SK-N-SH (cell line): ENCODE measurements at regions of chr9 and their contacts with region 1.

Region 1: DNA sequence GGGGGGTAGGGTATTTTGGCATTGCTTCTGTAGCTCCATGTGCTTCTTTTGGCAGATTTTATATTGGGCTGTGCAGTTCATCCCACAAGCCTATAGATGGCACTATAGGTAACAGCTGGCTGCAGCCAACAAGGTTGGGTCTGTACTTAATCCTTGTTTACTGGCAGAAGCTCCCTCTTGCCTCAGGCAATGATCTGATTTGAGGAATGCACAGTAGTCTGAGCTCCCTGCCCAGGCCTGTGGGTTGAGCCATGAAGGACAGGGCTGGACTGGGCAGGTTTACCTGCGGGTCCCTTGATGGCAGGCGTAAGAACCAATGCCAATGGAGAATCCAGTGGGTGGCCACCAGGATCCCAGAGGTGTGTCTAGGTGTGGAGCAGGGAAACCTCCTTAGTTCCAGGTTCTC is 11.7 kb upstream of the OR1J2 start:
- DNase-seq: peak; percentile 45
- H3K4me3 ChIP-seq: no peak overlapping the region
- H3K27ac ChIP-seq: no peak overlapping the region
- H3K4me1 ChIP-seq: no peaks in the 10 kb centered on the region; a peak in 1 of 4 replicates
- H3K27me3 ChIP-seq: no peaks in the 10 kb centered on the region
- CTCF ChIP-seq: peak; percentile 78
- EP300 ChIP-seq: no peak
- RAD21 ChIP-seq: peak; percentile 59

Region 2: DNA sequence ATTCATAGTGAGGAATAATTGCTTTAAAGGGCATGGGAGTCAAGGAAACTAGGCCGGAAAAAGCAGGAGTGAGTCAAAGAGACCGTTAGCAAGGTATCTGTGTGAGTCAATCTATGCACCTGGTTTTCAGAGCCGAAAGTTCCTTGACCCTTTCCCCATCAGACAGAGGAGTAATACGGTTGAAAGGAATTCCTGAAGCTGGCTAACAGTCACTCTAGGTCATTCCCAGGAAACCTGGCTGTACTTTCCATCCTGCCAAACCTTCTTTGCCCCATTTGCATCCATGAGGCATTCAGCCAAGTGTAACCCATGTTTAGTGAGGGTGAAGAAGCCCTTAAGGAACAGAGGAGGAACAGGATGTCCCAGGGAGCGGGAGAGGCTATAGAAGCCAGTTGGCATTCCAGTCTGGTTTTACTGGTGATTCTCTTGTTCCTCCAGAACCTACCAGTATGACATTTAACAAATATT is 250.4 kb before region 1 on chr9:
- CTCF ChIA-PET with region 1: no interaction called
- POLR2A ChIA-PET with region 1: no interaction called
- DNase-seq: no peak
- H3K4me3 ChIP-seq: no peak overlapping the region
- H3K27ac ChIP-seq: no peak overlapping the region
- H3K4me1 ChIP-seq: no peaks in the 10 kb centered on the region
- H3K27me3 ChIP-seq: no peaks in the 10 kb centered on the region
- CTCF ChIP-seq: no peak
- EP300 ChIP-seq: no peak
- RAD21 ChIP-seq: no peak

Region 3: DNA sequence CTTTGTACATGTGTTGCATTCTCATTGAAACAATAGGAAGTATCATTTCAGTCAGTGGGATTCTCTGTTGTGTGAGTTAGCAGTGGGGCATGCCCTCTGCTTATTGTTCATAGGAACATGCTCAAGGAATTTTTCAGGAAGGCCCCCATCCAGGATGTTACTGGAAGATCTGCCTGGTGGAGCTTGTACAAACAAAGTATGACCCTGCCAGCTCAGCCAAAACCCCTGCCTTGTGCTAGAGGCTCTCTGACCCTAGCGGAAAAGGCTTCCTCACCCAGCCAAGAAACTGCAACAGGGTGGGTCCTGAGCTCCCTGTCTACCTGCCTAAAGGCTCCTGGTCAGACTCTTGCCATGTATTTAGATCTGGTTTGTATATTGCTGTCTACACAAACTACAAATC is 191.0 kb before region 1 on chr9:
- CTCF ChIA-PET with region 1: no interaction called
- POLR2A ChIA-PET with region 1: no interaction called
- DNase-seq: no peak
- H3K4me3 ChIP-seq: no peak overlapping the region
- H3K27ac ChIP-seq: no peak overlapping the region
- H3K4me1 ChIP-seq: 0 out of 4 replicates have a peak, but pooled peaks cover 0 to 4% of the 10 kb centered on the region in 2 experiments
- H3K27me3 ChIP-seq: no peaks in the 10 kb centered on the region
- CTCF ChIP-seq: no peak
- EP300 ChIP-seq: no peak
- RAD21 ChIP-seq: no peak

Region 4: GRCh38 chr9:122464633-122465567 is 34.0 kb before region 1 on chr9:
- CTCF ChIA-PET with region 1: interaction called, 13 read pairs
- POLR2A ChIA-PET with region 1: no interaction called
- DNase-seq: peak; percentile 52
- H3K4me3 ChIP-seq: peak overlapping the region; percentile 47 to 60
- H3K27ac ChIP-seq: peak overlapping the region in 1 of 2 experiments; percentile 7; a peak in 1 of 4 replicates
- H3K4me1 ChIP-seq: peaks cover 3 to 4% of the 10 kb centered on the region in 2 experiments; a peak in 2 of 4 replicates
- H3K27me3 ChIP-seq: no peaks in the 10 kb centered on the region
- CTCF ChIP-seq: peak; percentile 92
- EP300 ChIP-seq: 0 out of 4 replicates have a peak, but pooled peaks of 1 of the 2 experiments have one; percentile 9
- RAD21 ChIP-seq: peak; percentile 85

Region 5: DNA sequence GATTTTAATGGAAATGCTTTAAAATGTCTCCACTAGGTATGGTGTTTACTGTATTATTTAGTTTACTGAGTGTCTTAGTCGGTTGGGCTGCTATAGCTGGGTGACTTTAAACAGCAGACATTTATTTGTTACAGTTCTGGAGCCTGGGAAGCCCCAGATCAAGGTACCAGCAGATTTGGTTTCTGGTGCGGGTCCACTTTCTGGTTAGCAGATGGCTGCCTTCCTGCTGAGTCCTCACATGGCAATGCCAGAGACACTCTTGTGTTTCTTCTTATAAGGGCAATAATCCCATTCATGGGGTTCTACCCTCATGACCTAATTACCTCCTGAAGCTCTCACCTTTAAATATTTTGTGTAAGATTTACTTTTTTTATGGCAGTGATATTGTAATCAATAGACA is 19.3 kb after region 1 on chr9:
- CTCF ChIA-PET with region 1: interaction called, 12 read pairs
- POLR2A ChIA-PET with region 1: no interaction called
- DNase-seq: no peak
- H3K4me3 ChIP-seq: no peak overlapping the region
- H3K27ac ChIP-seq: no peak overlapping the region
- H3K4me1 ChIP-seq: no peaks in the 10 kb centered on the region
- H3K27me3 ChIP-seq: peaks cover 7% of the 10 kb centered on the region; the same call in 1 of the 2 replicates
- CTCF ChIP-seq: no peak
- EP300 ChIP-seq: no peak
- RAD21 ChIP-seq: no peak